ENCODE measurements at regions of chr21 and their contacts with region 1.

Region 1: GRCh38 chr21:35686156-35686555 is 374.2 kb downstream of the SETD4 start:
- DNase-seq: no peak
- H3K4me3 ChIP-seq: no peak overlapping the region
- H3K27ac ChIP-seq: no peak overlapping the region
- H3K4me1 ChIP-seq: no peaks in the 10 kb centered on the region
- H3K27me3 ChIP-seq: no peaks in the 10 kb centered on the region
- CTCF ChIP-seq: no peak

Region 2: DNA sequence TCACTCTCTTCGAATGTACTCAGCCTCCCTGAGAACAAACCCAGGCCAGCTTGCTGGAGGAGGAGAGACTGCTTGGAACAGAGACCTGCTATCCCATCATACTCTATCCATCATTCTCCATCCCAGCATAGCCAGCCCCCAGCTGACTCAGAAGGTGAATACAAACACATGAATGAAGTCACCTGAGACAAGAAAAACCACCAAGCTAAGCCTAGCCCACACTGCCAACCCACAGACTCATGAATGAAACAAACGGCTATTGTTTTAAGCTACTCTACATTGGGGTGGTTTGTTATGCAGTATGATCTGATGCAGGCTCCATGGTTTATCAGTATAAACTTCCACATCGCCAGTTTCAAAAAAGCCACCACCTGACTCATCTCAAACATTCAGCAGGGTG is 21.5 kb before region 1 on chr21:
- intact Hi-C with region 1: loop called (anchors 1 kb)
- DNase-seq: no peak
- H3K4me3 ChIP-seq: no peak overlapping the region
- H3K27ac ChIP-seq: no peak overlapping the region
- H3K4me1 ChIP-seq: no peaks in the 10 kb centered on the region
- H3K27me3 ChIP-seq: no peaks in the 10 kb centered on the region
- CTCF ChIP-seq: no peak

Region 3: DNA sequence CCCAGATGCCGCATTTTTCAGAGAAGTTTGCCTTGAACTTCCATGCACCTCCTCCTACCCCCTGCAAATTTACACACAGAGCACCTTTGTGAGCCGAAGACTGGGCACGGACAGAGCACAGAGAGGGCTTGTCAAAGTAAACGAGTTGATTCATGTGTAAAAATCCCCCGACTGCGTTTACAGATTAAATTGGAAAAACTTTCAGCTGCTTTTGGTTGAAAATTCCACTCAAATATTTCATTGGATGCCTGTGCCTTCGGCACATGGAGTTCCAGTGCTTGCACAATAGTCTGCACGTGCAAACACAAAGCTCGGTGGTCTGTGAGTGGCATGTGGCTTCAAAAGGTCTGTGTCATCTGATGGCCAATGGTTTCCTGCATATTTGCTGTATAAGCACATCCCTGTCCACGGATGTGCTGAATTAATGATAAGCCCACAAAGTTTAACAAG is 196.7 kb after region 1 on chr21:
- intact Hi-C with region 1: no loop called
- DNase-seq: no peak
- H3K4me3 ChIP-seq: no peak overlapping the region
- H3K27ac ChIP-seq: no peak overlapping the region
- H3K4me1 ChIP-seq: no peaks in the 10 kb centered on the region
- H3K27me3 ChIP-seq: peaks cover 0 to 7% of the 10 kb centered on the region in 2 donors
- CTCF ChIP-seq: no peak

Region 4: DNA sequence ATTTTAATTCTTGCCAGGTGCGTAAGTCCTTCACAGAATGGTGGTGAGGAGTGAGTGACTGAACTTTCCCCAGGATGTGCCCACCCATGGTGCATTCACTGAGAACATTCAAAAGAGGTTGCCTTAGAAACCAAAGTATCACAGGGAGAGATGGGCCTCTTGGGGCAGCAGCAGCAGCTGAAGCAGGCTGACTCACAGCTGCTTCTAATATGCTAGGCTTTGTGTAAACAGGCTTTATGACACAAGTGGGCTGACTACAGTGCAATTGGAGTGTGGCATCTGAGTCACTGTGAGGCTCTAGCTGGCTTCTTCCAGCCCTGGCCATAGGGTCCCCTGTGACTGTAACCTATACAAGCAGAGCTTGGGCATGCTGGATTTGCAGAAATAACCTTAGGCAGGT is 1374.1 kb after region 1 on chr21:
- intact Hi-C with region 1: no loop called
- DNase-seq: peak; percentile 48 to 73
- H3K4me3 ChIP-seq: no peak overlapping the region
- H3K27ac ChIP-seq: no peak overlapping the region
- H3K4me1 ChIP-seq: peaks cover 0 to 6% (median 0%) of the 10 kb centered on the region in 4 donors
- H3K27me3 ChIP-seq: no peaks in the 10 kb centered on the region
- CTCF ChIP-seq: no peak

Measured in tibial artery (tissue), 4 donors.